OCI-LY7 (cell line): ENCODE measurements at regions of chr9 and their contacts with region 1.

Region 1: GRCh38 chr9:459491-460444 is 245.1 kb downstream of the DOCK8 start:
- DNase-seq: peak; percentile 10
- H3K4me3 ChIP-seq: no peak overlapping the region
- H3K27ac ChIP-seq: no peak overlapping the region
- H3K4me1 ChIP-seq: no peaks in the 10 kb centered on the region
- CTCF ChIP-seq: peak; percentile 27; the same call in 1 of the 2 replicates

Region 2: DNA sequence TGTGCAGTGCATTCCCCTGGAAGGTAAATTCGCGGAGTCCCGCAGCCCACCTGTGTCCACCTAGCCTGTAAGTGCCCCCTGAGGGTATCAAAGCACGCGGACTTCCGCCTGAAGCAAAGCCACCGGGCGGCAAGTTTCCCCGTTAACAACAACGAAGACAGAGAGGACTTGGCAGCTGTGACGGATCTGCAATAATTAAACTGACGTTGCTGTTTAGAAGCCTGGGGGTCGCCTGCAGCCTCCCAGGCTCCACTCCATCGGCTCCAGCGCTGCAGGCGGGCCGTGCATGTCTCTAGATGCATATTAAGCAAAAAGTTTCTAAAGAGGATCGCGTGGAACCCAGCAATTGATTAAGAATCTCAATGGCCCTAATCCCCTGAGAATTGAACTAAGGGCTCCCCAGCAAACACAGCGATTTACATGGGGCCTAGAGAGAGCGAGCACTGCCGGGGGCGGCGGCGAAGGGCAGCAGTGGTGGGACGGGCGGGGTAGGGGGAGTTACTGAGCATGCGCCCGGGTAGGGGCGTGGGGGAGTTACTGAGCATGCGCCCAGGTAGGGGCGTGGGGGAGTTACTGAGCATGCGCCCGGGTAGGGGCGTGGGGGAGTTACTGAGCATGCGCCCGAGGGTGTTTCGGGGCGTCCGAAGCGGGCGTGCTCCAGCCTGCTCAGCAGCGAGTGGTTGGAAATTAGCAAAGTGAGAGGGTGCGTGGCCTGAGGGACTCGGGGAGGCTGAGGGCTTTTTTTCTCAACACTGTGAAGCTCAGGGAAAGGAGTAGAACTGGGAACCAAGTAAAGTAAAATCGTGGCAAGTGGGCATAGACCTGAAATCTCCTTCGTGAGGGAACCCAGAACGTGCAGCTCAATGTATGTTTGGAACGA is 10.1 kb after region 1 on chr9:
- CTCF ChIA-PET with region 1: no interaction called
- POLR2A ChIA-PET with region 1: interaction called, 12 read pairs
- intact Hi-C with region 1: no loop called
- DNase-seq: peak; percentile 91
- H3K4me3 ChIP-seq: peak overlapping the region; percentile 71
- H3K27ac ChIP-seq: peak overlapping the region; percentile 91
- H3K4me1 ChIP-seq: peaks cover 28% of the 10 kb centered on the region
- CTCF ChIP-seq: no peak